AG04450 (cell line): ENCODE measurements at regions of chr4 and their contacts with region 1.

Region 1: GRCh38 chr4:168183717-168184608 is 91.6 kb downstream of the ANXA10 start:
- DNase-seq: no peak
- H3K4me3 ChIP-seq: no peak overlapping the region
- H3K27ac ChIP-seq: no peak overlapping the region
- H3K27me3 ChIP-seq: no peaks in the 10 kb centered on the region
- CTCF ChIP-seq: peak; percentile 71

Region 2: DNA sequence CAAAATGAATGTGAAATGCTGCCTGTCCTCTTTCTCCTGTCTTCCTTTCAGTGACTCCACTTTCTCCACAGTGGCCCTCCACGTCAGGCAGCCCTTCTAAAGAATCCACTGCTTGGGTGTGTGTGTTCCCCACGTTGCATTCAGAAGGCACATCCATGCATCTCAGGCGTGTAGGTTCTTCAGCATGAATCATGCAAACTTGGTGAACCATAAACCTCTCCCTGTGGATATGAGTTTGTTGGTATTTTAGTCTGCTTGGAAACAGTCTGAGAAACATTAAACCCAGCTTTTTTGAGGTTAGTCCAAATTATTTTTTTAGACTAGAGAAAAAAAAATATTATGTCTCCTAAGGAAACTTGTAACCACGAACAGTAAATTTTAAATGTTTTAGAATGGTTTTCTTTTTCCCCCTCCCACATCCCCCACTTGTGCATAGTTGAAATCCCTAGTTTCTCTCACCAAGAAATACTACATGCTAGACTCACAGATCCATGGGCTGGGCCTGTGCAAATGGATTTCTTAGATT is 574.5 kb after region 1 on chr4:
- CTCF ChIA-PET with region 1: interaction called, 10 read pairs
- POLR2A ChIA-PET with region 1: no interaction called
- DNase-seq: peak; percentile 71
- H3K4me3 ChIP-seq: no peak overlapping the region
- H3K27ac ChIP-seq: peak overlapping the region; percentile 66
- H3K27me3 ChIP-seq: no peaks in the 10 kb centered on the region
- CTCF ChIP-seq: no peak